ENCODE measurements at regions of chr2 and their contacts with region 1.

Region 1: DNA sequence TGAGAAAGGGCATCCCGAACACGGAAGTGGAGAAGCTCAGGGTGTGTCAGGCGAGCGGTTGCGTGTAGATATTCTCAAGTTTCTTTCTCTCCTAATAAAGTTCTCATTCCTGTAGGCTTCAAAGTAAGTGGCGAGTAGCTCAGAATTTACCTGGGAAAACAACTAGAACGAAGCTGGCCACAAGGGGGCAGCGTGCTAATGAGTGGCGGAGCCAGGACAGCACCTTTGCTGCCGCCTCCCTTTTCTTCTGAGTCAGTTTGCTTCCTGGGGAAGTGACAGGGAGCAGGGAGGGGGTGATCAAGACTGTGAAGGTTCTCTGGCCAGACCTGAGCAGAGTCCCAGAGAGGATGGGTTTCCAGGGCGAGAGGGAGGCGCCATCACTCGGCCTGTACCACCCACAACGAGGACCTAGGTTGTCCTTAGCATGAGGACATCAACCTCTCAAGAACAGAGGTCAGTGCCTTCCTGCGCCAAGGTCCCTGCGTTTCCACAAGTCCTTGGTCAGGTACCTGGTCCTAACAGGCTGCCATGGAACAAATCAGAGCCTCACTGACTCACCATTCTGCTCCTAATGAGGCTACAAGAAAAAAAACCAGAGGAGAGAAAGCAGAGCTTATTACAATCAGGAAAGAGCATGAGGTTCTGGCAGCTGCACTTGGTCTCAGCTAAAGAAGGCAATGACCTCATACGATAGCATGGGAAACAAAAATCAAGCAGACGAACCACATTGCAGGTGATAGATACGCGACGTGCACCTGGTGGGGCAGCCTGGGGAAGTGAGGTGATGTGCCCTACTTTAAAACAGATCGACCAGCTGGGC is 98.6 kb downstream of the PLB1 start:
- DNase-seq: peak; percentile 92 to 93
- H3K4me3 ChIP-seq: no peak overlapping the region
- H3K4me3 Mint-ChIP-seq: peak overlapping the region; percentile 17
- H3K27ac Mint-ChIP-seq: peak overlapping the region; percentile 100
- H3K4me1 ChIP-seq: peaks cover 41% of the 10 kb centered on the region
- H3K4me1 Mint-ChIP-seq: peaks cover 29% of the 10 kb centered on the region
- H3K27me3 ChIP-seq: no peaks in the 10 kb centered on the region
- H3K27me3 Mint-ChIP-seq: no peaks in the 10 kb centered on the region
- CTCF ChIP-seq: peak; percentile 88 to 91

Region 2: DNA sequence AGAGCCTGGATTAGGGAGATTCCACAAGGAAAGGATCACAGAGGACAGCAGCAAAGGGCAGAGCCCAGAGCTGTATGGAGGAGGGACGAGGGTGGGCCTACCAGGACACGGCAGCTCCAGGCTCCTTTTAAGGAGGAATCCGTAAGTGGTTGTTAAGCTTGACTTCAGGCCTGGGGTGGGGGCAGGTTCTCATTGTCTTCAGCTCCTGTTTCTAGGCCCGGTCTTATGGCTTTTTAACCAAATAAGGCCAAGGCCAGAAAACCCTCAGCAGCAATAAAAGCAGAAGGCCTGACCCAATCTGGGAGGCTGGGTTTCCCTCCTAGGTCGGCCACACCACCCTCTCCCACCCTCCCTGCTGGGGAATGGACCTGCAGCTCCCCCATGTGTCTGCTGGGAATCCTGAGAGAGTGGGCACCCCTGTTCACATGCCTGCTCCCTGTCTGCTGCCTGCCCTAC is 12.5 kb after region 1 on chr2:
- CTCF ChIA-PET with region 1: interaction called, 19 read pairs
- POLR2A ChIA-PET with region 1: no interaction called
- intact Hi-C with region 1: no loop called
- DNase-seq: peak; percentile 56 to 57
- H3K4me3 ChIP-seq: no peak overlapping the region
- H3K4me3 Mint-ChIP-seq: no peak overlapping the region
- H3K27ac Mint-ChIP-seq: no peak overlapping the region
- H3K4me1 ChIP-seq: peaks cover 13% of the 10 kb centered on the region
- H3K4me1 Mint-ChIP-seq: peaks cover 7% of the 10 kb centered on the region
- H3K27me3 ChIP-seq: no peaks in the 10 kb centered on the region
- H3K27me3 Mint-ChIP-seq: no peaks in the 10 kb centered on the region
- CTCF ChIP-seq: peak in 1 of 2 experiments; percentile 37

Region 3: DNA sequence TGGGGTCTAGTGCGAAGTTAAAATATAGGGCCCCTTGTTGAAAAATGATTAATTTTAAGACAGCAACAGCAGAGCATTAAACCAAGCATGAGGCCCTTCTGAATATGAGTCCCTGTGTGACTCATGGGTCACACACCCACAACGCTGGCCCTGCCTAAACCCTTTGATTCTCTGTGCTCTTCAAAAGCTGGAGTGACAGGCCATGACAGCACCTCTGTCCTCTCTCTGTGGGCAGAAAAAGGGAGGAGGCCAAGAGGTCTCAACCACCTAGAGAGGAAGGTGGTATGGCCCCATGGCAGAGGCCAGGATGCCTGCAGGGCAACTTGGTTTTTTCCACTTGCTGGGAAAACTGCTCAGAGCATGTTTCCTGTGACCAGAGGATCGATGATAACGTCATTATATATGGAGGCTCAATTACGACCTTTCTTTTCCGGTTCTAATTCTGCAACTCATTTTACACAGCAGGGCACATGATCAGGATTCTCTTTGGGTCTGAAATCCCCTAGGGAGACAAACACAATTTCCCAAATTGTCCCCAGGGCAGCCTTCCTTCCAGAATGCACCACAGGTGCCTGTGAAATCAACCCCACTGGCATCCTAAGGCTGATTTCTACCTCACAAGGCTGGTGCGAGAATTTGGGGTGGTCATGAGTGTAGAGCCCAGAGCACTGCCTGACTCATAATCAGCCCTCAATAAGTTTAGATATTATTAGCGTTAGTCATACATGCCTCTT is 55.1 kb after region 1 on chr2:
- CTCF ChIA-PET with region 1: interaction called, 6 read pairs
- POLR2A ChIA-PET with region 1: no interaction called
- intact Hi-C with region 1: loop called (anchors 5 kb)
- DNase-seq: no peak
- H3K4me3 ChIP-seq: no peak overlapping the region
- H3K4me3 Mint-ChIP-seq: no peak overlapping the region
- H3K27ac Mint-ChIP-seq: no peak overlapping the region
- H3K4me1 ChIP-seq: peaks cover 50% of the 10 kb centered on the region
- H3K4me1 Mint-ChIP-seq: peaks cover 47% of the 10 kb centered on the region
- H3K27me3 ChIP-seq: no peaks in the 10 kb centered on the region
- H3K27me3 Mint-ChIP-seq: no peaks in the 10 kb centered on the region
- CTCF ChIP-seq: no peak

Region 4: GRCh38 chr2:28681158-28681571 is 86.7 kb after region 1 on chr2:
- CTCF ChIA-PET with region 1: interaction called, 3 read pairs
- POLR2A ChIA-PET with region 1: no interaction called
- intact Hi-C with region 1: loop called (anchors 1 kb)
- DNase-seq: no peak
- H3K4me3 ChIP-seq: no peak overlapping the region
- H3K4me3 Mint-ChIP-seq: no peak overlapping the region
- H3K27ac Mint-ChIP-seq: no peak overlapping the region
- H3K4me1 ChIP-seq: peaks cover 38% of the 10 kb centered on the region
- H3K4me1 Mint-ChIP-seq: peaks cover 50% of the 10 kb centered on the region
- H3K27me3 ChIP-seq: no peaks in the 10 kb centered on the region
- H3K27me3 Mint-ChIP-seq: no peaks in the 10 kb centered on the region
- CTCF ChIP-seq: no peak

Region 5: GRCh38 chr2:28751252-28751955 is 156.9 kb after region 1 on chr2 and contains the start of gene PPP1CB:
- CTCF ChIA-PET with region 1: interaction called, 40 read pairs
- POLR2A ChIA-PET with region 1: interaction called, 19 read pairs
- intact Hi-C with region 1: loop called (anchors 1 kb)
- DNase-seq: peak; percentile 96 to 97
- H3K4me3 ChIP-seq: peak within 1 kb of the TSS; percentile 89
- H3K4me3 Mint-ChIP-seq: peak within 1 kb of the TSS; percentile 97
- H3K27ac Mint-ChIP-seq: peak within 1 kb of the TSS; percentile 99
- H3K4me1 ChIP-seq: peaks cover 15% of the 10 kb centered on the region
- H3K4me1 Mint-ChIP-seq: peaks cover 31% of the 10 kb centered on the region
- H3K27me3 ChIP-seq: no peaks in the 10 kb centered on the region
- H3K27me3 Mint-ChIP-seq: no peaks in the 10 kb centered on the region
- CTCF ChIP-seq: peak in 1 of 2 experiments; percentile 43
- total RNA-seq, gene PPP1CB: 185 and 190 TPM in 2 replicates